Panc1 (cell line): ENCODE measurements at regions of chr3 and their contacts with region 1.

Region 1: GRCh38 chr3:98209244-98209643 is 42.7 kb downstream of the OR5H15 start:
- DNase-seq: no peak
- ATAC-seq: no peak
- H3K4me3 ChIP-seq: no peak overlapping the region
- H3K27ac ChIP-seq: no peak overlapping the region
- H3K4me1 ChIP-seq: no peaks in the 10 kb centered on the region
- H3K27me3 ChIP-seq: no peaks in the 10 kb centered on the region
- CTCF ChIP-seq: no peak

Region 2: GRCh38 chr3:98246142-98246541 is 36.9 kb after region 1 on chr3:
- CTCF ChIA-PET with region 1: no interaction called
- POLR2A ChIA-PET with region 1: no interaction called
- in situ Hi-C with region 1: no loop called
- intact Hi-C with region 1: no loop called
- DNase-seq: no peak
- ATAC-seq: no peak
- H3K4me3 ChIP-seq: no peak overlapping the region
- H3K27ac ChIP-seq: no peak overlapping the region
- H3K4me1 ChIP-seq: no peaks in the 10 kb centered on the region
- H3K27me3 ChIP-seq: no peaks in the 10 kb centered on the region
- CTCF ChIP-seq: no peak

Region 3: GRCh38 chr3:98259707-98260106 is 50.5 kb after region 1 on chr3:
- CTCF ChIA-PET with region 1: no interaction called
- POLR2A ChIA-PET with region 1: no interaction called
- in situ Hi-C with region 1: no loop called
- intact Hi-C with region 1: loop called (anchors 10 kb)
- DNase-seq: no peak
- ATAC-seq: no peak
- H3K4me3 ChIP-seq: no peak overlapping the region
- H3K27ac ChIP-seq: no peak overlapping the region
- H3K4me1 ChIP-seq: no peaks in the 10 kb centered on the region
- H3K27me3 ChIP-seq: no peaks in the 10 kb centered on the region
- CTCF ChIP-seq: no peak